ENCODE measurements at regions of chr21 and their contacts with region 1.

Region 1: GRCh38 chr21:15221799-15222386 is 157.1 kb upstream of the NRIP1 start:
- DNase-seq: peak; percentile 52
- ATAC-seq: peak; percentile 80
- H3K4me3 Mint-ChIP-seq: no peak overlapping the region
- H3K27ac Mint-ChIP-seq: no peak overlapping the region
- H3K4me1 Mint-ChIP-seq: peaks cover 14% of the 10 kb centered on the region
- H3K27me3 Mint-ChIP-seq: peaks cover 4% of the 10 kb centered on the region

Region 2: GRCh38 chr21:15437883-15438282 is 216.0 kb after region 1 on chr21:
- CTCF ChIA-PET with region 1: no interaction called
- POLR2A ChIA-PET with region 1: no interaction called
- intact Hi-C with region 1: loop called in 1 of 2 experiments (anchors 2 kb)
- DNase-seq: no peak
- ATAC-seq: peak; percentile 84
- H3K4me3 Mint-ChIP-seq: no peak overlapping the region
- H3K27ac Mint-ChIP-seq: no peak overlapping the region
- H3K4me1 Mint-ChIP-seq: peaks cover 19% of the 10 kb centered on the region
- H3K27me3 Mint-ChIP-seq: no peaks in the 10 kb centered on the region

Measured in activated CD4-positive, alpha-beta T cell treated with anti-CD3 and anti-CD28 coated beads for 36 hours (primary cell).